Body of pancreas (tissue), 4 donors: ENCODE measurements at regions of chr6 and their contacts with region 1.

Region 1: GRCh38 chr6:121305957-121306607 is 28.2 kb downstream of the TBC1D32 start:
- DNase-seq: no peak
- ATAC-seq: peak; percentile 78
- H3K4me3 ChIP-seq: no peak overlapping the region
- H3K27ac ChIP-seq: no peak overlapping the region
- H3K4me1 ChIP-seq: peaks cover 3% of the 10 kb centered on the region
- H3K27me3 ChIP-seq: no peaks in the 10 kb centered on the region
- CTCF ChIP-seq: peak; percentile 9 to 67 (median 62)
- POLR2A ChIP-seq: no peak

Region 2: DNA sequence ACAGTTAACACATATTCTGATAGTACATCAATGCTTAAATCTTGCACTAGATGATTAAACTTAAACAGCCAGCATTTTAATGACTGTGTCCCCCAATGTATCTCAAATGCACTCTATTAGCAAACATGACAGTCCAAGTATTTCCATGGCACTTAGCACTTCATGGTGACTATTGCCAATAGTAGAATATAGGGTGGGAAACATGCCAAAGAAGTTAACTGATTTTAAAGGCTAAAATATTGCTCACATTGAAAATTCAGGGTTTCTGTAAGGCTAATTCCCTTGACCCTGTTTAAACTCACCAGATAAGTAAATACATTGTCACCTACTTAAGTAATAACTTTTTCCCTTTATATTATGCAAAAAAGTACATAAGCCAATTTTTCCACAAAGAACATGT is 238.7 kb before region 1 on chr6:
- intact Hi-C with region 1: loop called (anchors 10 kb)
- DNase-seq: no peak
- ATAC-seq: no peak
- H3K4me3 ChIP-seq: no peak overlapping the region
- H3K27ac ChIP-seq: no peak overlapping the region
- H3K4me1 ChIP-seq: no peaks in the 10 kb centered on the region
- H3K27me3 ChIP-seq: no peaks in the 10 kb centered on the region
- CTCF ChIP-seq: no peak
- POLR2A ChIP-seq: no peak

Region 3: DNA sequence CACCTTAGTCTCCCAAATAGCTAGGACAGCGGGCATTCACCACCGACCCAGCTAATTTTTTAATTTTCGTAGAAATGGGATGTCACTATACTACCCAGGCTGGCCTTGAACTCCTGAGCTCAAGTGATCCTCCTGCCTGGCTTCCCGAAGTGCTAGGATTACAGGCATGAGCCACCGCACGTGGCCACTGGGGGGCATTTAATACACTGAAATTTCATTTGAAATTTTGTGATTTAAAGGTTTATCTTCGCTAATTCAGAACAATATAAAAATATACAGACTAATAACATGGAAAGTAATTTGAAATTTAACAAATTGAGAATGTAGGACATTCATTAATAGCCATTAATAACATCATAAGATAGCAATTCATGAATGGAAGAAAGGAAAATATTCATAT is 48.7 kb after region 1 on chr6:
- intact Hi-C with region 1: no loop called
- DNase-seq: peak in 1 of 4 donors; percentile 21
- ATAC-seq: no peak
- H3K4me3 ChIP-seq: no peak overlapping the region
- H3K27ac ChIP-seq: no peak overlapping the region
- H3K4me1 ChIP-seq: no peaks in the 10 kb centered on the region
- H3K27me3 ChIP-seq: no peaks in the 10 kb centered on the region
- CTCF ChIP-seq: peak in 5 of 7 experiments; percentile 10 to 33 (median 26)
- POLR2A ChIP-seq: no peak